ENCODE measurements at regions of chr16 and their contacts with region 1.

Region 1: GRCh38 chr16:16890964-16891363 is 512.0 kb downstream of the NPIPA7 start:
- DNase-seq: no peak
- ATAC-seq: no peak
- H3K4me3 ChIP-seq: no peak overlapping the region
- H3K4me3 Mint-ChIP-seq: no peak overlapping the region
- H3K27ac ChIP-seq: no peak overlapping the region
- H3K27ac Mint-ChIP-seq: no peak overlapping the region
- H3K4me1 ChIP-seq: no peaks in the 10 kb centered on the region
- H3K4me1 Mint-ChIP-seq: no peaks in the 10 kb centered on the region
- H3K27me3 ChIP-seq: no peaks in the 10 kb centered on the region
- H3K27me3 Mint-ChIP-seq: no peaks in the 10 kb centered on the region
- CTCF ChIP-seq: no peak

Region 2: DNA sequence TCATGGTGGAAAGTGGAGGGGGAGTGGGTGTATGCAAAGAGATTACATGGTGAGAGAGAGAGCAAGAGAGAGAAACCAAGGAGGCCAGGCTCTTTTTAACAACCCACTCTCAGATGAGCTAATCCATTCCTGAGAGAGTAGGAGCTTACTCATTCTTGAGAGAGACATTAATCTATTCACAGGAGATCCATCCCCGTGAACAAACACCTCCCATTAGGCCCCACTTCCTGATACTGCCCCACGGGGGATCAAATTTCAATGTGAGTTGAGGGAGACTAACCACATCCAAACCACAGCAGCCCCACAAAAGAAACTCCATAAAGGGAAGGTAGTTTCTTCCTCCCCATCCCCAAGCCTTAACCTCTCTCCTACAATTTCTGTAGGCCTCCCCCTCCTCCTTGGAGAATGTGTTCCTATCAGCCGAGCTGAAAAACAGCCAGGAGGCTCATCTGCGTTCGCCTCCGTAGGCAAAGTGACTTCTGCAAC is 62.0 kb before region 1 on chr16:
- CTCF ChIA-PET with region 1: no interaction called
- POLR2A ChIA-PET with region 1: no interaction called
- intact Hi-C with region 1: loop called in 1 of 2 experiments (anchors 10 kb)
- DNase-seq: no peak
- ATAC-seq: no peak
- H3K4me3 ChIP-seq: no peak overlapping the region
- H3K4me3 Mint-ChIP-seq: no peak overlapping the region
- H3K27ac ChIP-seq: no peak overlapping the region
- H3K27ac Mint-ChIP-seq: no peak overlapping the region
- H3K4me1 ChIP-seq: no peaks in the 10 kb centered on the region
- H3K4me1 Mint-ChIP-seq: no peaks in the 10 kb centered on the region
- H3K27me3 ChIP-seq: peaks cover 0 to 3% of the 10 kb centered on the region in 2 experiments
- H3K27me3 Mint-ChIP-seq: peaks cover 50% of the 10 kb centered on the region
- CTCF ChIP-seq: no peak

Region 3: DNA sequence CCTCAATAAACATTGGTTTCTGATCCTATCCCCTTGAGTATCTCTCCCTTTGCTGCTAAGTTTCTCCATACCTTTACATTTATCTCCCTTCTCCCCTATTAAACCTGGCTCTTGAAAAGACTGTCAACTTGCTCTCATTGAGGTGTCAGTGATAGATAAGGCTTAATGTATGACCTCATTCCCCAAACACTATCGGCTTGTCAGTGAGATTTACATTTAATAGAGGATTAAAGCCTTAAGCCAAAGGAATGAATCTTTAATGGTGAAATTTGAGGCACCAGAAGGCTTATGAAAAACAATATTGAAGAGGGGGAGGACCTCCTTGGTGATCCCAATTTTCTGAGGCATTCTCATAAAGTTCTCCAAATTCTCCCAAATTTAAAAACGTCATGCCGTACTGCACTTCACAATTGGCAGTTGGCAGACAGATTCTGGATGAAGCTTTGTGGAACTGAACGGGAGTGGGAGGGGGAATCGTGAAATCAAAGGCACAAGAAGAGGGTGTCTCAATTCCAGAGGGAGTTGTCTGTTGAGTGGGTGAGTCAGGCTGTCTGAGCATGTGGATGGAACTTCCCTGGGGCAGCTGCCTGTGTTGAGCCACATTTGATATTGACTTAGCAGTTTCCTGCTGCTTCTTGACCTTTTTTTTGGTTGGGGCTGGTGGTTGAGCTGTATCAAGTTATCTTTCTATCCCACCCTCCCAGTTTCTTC is 33.2 kb before region 1 on chr16:
- CTCF ChIA-PET with region 1: no interaction called
- POLR2A ChIA-PET with region 1: no interaction called
- intact Hi-C with region 1: no loop called
- DNase-seq: no peak
- ATAC-seq: no peak
- H3K4me3 ChIP-seq: no peak overlapping the region
- H3K4me3 Mint-ChIP-seq: no peak overlapping the region
- H3K27ac ChIP-seq: no peak overlapping the region
- H3K27ac Mint-ChIP-seq: no peak overlapping the region
- H3K4me1 ChIP-seq: peaks cover 3% of the 10 kb centered on the region
- H3K4me1 Mint-ChIP-seq: no peaks in the 10 kb centered on the region
- H3K27me3 ChIP-seq: peaks cover 0 to 6% of the 10 kb centered on the region in 2 experiments
- H3K27me3 Mint-ChIP-seq: peaks cover 41% of the 10 kb centered on the region
- CTCF ChIP-seq: no peak

Region 4: DNA sequence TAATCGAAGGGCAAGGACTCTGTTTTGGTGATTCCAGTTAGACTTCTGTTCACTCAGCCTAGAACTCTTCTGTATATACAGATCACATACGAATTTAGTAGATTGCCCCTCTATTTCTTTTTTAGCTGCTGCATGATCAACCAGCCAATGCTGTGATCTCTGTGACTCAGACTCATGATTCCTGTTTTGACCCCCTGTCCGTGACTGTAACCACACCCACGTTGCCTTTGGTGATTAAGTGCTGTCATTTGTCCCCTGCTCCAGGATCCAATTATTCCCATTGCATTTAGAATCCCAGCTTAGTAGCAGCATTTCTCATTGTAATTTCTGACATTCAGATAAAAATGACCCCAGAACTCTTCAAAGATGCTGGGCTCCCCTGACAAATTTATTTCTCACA is 33.6 kb after region 1 on chr16:
- CTCF ChIA-PET with region 1: no interaction called
- POLR2A ChIA-PET with region 1: no interaction called
- intact Hi-C with region 1: loop called in 1 of 2 experiments (anchors 1 kb)
- DNase-seq: no peak
- ATAC-seq: no peak
- H3K4me3 ChIP-seq: no peak overlapping the region
- H3K4me3 Mint-ChIP-seq: no peak overlapping the region
- H3K27ac ChIP-seq: no peak overlapping the region
- H3K27ac Mint-ChIP-seq: no peak overlapping the region
- H3K4me1 ChIP-seq: no peaks in the 10 kb centered on the region
- H3K4me1 Mint-ChIP-seq: no peaks in the 10 kb centered on the region
- H3K27me3 ChIP-seq: no peaks in the 10 kb centered on the region
- H3K27me3 Mint-ChIP-seq: no peaks in the 10 kb centered on the region
- CTCF ChIP-seq: no peak